HAP-1 (cell line): ENCODE measurements at regions of chr14 and their contacts with region 1.

Region 1: DNA sequence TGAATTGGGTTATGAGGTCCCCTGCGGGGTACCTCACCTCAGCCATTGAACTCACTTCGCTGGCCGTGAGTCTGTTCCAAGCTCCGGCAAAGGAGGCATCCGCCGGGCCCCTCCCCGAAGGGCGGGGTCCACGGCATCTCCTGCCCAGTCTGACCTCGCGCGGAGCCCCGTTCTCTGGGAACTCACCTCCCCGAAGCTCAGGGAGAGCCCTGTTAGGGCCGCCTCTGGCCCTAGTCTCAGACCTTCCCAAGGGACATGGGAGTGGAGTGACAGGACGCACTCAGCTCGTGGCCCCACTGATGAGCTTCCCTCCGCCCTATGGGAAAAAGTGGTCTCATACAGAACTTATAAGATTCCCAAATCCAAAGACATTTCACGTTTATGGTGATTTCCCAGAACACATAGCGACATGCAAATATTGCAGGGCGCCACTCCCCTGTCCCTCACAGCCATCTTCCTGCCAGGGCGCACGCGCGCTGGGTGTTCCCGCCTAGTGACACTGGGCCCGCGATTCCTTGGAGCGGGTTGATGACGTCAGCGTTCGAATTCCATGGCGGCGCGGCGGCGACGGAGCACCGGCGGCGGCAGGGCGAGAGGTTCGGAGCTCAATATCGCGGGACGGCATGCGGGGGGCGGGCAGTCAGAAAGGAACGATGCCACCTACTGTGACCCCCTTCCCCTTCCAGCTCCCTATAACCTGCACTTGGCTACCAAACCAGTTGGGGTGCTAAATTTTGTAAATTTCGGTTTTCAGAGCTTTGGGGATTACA is at the start of gene PARP2:
- DNase-seq: peak; percentile 98
- H3K4me3 ChIP-seq: peak within 1 kb of the TSS; percentile 58
- H3K4me1 ChIP-seq: peaks cover 6% of the 10 kb centered on the region
- H3K27me3 ChIP-seq: no peaks in the 10 kb centered on the region

Region 2: DNA sequence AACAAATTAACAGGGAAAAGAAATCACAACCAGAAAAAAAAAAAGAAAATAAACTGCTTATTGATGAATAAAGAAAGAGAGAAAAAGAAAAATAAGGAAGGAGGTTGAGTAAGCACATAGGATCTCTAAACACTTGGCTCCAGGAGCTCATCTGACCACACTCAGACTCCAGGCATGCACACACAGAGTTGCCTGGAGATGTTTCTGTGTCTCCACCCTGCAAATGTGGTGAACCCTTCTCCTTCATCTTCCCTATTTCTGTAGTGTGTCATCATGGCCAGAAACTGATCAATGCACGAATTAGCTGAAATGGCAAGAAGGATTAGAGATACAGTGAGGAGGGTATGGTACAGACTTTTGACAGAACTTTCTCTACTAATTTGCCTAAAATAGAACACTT is 519.5 kb before region 1 on chr14:
- in situ Hi-C with region 1: no loop called
- DNase-seq: no peak
- H3K4me3 ChIP-seq: no peak overlapping the region
- H3K4me1 ChIP-seq: no peaks in the 10 kb centered on the region
- H3K27me3 ChIP-seq: no peaks in the 10 kb centered on the region

Region 3: GRCh38 chr14:20461274-20462001 is 118.2 kb after region 1 on chr14 and contains the start of gene PIP4P1:
- in situ Hi-C with region 1: loop called (anchors 5 kb)
- DNase-seq: peak; percentile 99 to 100
- H3K4me3 ChIP-seq: peak within 1 kb of the TSS; percentile 69
- H3K4me1 ChIP-seq: peaks cover 13% of the 10 kb centered on the region; the same call in 1 of the 2 replicates
- H3K27me3 ChIP-seq: no peaks in the 10 kb centered on the region

Region 4: GRCh38 chr14:21092273-21093011 is 749.2 kb after region 1 on chr14:
- in situ Hi-C with region 1: loop called (anchors 25 kb)
- DNase-seq: peak; percentile 54 to 93
- H3K4me3 ChIP-seq: no peak overlapping the region
- H3K4me1 ChIP-seq: peaks cover 29% of the 10 kb centered on the region
- H3K27me3 ChIP-seq: no peaks in the 10 kb centered on the region